PC-9 (cell line): ENCODE measurements at regions of chr11 and their contacts with region 1.

Region 1: DNA sequence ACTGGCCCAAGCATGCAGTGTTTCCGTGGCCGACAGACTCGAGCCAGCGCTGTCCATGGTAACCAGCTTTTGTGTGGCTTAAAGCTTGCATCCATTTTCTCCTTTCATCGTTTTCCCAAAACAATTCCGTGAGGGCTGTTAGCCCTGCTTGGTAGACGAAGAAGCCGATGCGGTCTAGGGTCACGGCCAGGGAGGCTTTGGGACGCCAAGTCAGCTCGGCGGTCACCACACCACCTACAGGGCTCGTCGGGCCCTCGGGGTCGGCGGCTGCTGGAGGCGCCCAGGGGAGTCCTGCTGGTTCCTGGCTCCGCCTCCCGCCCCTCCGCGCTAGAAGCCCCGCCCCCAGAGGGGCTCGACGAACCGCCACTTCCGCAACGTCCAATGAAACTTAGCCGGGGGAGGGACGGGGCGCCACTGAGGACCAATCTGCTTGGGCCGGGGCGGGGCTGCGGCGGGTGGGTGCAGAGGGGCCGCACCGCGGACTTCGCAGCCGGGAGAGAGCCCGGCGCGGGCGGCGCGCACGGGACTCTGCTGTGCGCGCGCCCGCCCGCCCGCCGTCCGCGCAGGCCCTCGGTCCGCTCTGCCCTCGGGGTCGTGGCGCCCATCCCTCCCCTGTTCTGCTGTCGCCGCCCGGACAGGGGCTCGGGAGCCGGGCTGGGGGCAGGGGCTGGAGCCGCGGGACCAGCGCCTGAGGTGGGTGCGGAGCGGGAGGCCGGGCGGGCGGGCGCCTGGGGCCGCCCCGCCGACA is at the start of gene TIGD3:
- DNase-seq: peak; percentile 88 to 99
- H3K4me3 ChIP-seq: peak within 1 kb of the TSS; percentile 87
- H3K27ac ChIP-seq: no peak within 1 kb of the TSS
- H3K4me1 ChIP-seq: peaks cover 11% of the 10 kb centered on the region
- H3K27me3 ChIP-seq: no peaks in the 10 kb centered on the region
- CTCF ChIP-seq: no peak
- total RNA-seq, gene TIGD3: 1.7 and 1.8 TPM in 2 replicates

Region 2: GRCh38 chr11:65301491-65302329 is 52.7 kb before region 1 on chr11:
- CTCF ChIA-PET with region 1: interaction called, 13 read pairs
- POLR2A ChIA-PET with region 1: no interaction called
- intact Hi-C with region 1: no loop called
- DNase-seq: peak in 1 of 2 experiments; percentile 53
- H3K4me3 ChIP-seq: no peak overlapping the region
- H3K27ac ChIP-seq: no peak overlapping the region
- H3K4me1 ChIP-seq: peaks cover 11% of the 10 kb centered on the region
- H3K27me3 ChIP-seq: no peaks in the 10 kb centered on the region
- CTCF ChIP-seq: no peak

Region 3: DNA sequence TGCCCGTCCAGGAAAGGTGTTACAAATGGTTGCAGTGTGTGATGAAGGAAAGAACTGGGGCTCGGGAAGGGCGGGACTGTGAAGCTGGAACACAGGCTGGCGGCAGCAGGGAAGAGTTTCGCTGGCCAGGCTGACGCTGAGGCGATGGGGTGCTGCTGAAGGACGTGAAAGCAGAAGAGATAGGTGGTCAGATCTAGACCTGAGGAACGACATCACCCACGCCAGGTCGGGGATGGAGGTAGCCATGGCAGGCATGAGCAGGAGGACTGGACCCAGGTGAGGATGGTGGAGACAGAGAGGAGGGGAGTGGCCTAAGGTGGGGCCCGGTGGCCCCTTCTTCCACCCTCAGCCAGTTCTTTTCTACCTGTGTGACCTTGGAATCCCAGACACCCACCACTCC is 30.6 kb before region 1 on chr11:
- CTCF ChIA-PET with region 1: no interaction called
- POLR2A ChIA-PET with region 1: no interaction called
- intact Hi-C with region 1: no loop called
- DNase-seq: no peak
- H3K4me3 ChIP-seq: no peak overlapping the region
- H3K27ac ChIP-seq: no peak overlapping the region
- H3K4me1 ChIP-seq: no peaks in the 10 kb centered on the region
- H3K27me3 ChIP-seq: no peaks in the 10 kb centered on the region
- CTCF ChIP-seq: no peak

Region 4: DNA sequence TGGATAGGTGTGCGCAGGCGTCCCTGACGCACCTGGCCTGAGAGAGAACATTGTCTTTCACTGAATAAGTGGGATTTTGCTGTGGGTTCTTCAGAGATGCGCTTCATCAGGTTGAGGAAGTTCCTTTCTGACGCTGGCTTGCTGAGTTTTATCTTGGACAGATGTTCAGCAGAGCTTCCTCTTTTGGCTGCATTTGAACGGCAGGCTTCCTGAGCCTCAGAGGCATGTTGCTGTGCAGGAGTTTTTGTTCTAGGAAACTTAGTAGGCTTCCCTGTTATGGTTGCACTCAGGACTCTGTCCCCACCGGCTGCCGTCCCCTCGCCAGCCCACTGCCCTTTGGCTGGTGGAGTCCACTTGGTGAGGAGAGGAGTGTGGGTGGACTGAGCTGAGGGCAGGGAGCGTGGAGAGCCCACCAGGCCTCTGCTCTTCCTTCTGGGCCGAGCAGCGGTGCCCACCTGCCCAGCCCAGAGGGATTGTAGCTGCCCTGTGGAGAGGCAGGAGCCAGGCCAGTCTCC is 49.2 kb after region 1 on chr11:
- CTCF ChIA-PET with region 1: no interaction called
- POLR2A ChIA-PET with region 1: no interaction called
- intact Hi-C with region 1: no loop called
- DNase-seq: no peak
- H3K4me3 ChIP-seq: no peak overlapping the region
- H3K27ac ChIP-seq: no peak overlapping the region
- H3K4me1 ChIP-seq: no peaks in the 10 kb centered on the region
- H3K27me3 ChIP-seq: no peaks in the 10 kb centered on the region
- CTCF ChIP-seq: no peak

Region 5: DNA sequence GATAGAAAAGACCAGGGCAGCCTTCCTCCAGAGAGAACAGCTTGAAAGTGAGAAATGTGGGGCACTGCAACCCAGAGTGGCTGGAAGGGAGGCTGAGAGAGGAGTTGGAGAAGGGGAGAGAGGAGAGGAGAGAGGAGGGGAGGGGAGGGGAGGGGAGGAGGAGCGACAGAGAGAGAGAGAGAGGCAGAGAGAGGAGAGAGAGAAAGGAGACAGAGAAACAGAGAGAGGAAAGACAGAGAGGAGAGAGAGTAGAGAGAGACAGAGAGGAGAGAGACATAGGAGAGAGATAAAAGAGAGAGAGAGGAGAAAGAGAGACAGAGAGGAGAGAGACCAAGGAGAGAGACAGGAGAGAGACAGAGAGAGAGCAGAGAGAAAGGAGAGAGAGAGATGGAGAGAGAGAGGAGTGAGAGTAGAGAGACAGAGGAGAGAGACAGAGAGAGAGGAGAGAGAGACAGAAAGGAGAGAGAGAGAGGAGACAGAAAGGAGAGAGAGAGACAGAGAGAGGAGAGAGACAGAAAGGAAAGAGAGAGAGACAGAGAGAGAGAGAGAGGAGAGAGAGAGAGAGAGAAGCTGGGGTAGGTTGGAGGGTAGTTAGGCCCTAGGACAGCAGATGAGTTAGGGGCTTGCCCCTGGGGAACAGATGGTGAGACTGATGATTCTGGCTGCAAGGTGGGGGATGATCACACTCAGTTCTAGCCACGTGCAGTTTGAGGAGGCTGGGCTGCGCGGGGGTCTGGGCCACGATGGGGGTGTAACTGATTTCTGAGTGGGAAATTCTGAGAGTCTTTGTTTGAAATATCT is 161.9 kb after region 1 on chr11:
- CTCF ChIA-PET with region 1: no interaction called
- POLR2A ChIA-PET with region 1: no interaction called
- intact Hi-C with region 1: no loop called
- DNase-seq: no peak
- H3K4me3 ChIP-seq: no peak overlapping the region
- H3K27ac ChIP-seq: no peak overlapping the region
- H3K4me1 ChIP-seq: no peaks in the 10 kb centered on the region
- H3K27me3 ChIP-seq: no peaks in the 10 kb centered on the region
- CTCF ChIP-seq: no peak; the same call in 1 of the 2 replicates

Region 6: DNA sequence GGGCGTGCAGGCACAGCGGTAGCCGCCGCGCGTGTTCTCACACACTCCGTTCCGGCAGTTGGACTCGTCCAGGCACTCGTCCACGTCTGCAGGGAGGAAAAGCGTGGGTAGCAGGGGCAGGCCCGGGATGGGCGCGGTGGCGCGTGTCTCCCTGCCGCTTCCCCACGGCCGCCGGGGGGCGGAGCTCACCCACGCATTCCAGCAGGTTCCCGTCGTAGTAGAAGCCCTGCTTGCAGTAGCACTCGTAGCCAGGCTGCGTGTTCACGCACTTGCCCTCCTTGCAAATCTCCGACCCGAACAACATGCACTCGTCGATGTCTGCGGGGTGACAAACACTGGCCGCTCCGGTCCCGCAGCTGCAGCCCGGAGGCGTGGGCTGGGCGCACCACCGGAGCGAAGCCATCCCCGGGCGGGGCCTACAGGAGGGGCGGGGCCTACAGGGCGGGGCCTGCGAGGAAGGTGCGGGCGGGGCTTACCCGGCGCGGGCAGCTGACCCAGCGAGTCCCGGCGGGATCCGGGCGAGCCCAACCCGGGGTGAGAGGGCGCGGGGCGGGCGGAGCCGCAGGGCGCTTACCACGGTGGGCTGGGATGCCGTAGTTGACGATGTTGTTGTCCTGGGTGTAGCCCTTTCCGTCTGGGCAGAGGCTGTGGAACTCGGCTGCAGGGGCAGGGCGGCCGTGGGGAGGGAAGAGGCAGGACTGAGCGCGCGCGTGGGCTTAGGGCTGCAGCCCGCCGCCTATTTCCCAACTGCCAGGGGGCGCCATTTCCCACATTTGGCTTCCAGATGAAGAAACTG is 186.1 kb after region 1 on chr11:
- CTCF ChIA-PET with region 1: no interaction called
- POLR2A ChIA-PET with region 1: no interaction called
- intact Hi-C with region 1: no loop called
- DNase-seq: peak; percentile 66 to 90
- H3K4me3 ChIP-seq: peak overlapping the region; percentile 46; the same call in 1 of the 2 replicates
- H3K27ac ChIP-seq: no peak overlapping the region
- H3K4me1 ChIP-seq: peaks cover 17% of the 10 kb centered on the region
- H3K27me3 ChIP-seq: no peaks in the 10 kb centered on the region
- CTCF ChIP-seq: peak; percentile 95

Region 7: DNA sequence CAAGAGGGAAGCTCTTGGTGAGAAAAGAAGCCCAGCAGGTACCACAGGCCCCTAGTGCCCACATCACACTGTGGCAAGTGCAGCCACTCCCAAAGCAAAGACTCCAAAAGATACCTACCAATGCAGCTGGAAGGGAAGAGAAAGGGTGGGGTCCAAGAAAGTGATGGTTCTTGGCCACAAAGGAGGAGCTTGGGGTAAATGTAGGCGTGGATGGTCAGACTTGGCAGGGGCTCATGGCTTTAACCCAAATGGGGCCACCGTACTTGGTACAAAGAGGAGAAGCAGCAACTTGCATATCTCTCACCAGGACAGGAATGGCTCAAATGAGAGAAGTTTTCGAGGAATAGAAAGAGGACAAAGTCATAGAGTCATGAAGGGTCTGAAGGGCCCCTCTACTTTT is 254.8 kb after region 1 on chr11:
- CTCF ChIA-PET with region 1: no interaction called
- POLR2A ChIA-PET with region 1: interaction called, 12 read pairs
- intact Hi-C with region 1: no loop called
- DNase-seq: no peak
- H3K4me3 ChIP-seq: no peak overlapping the region
- H3K27ac ChIP-seq: no peak overlapping the region
- H3K4me1 ChIP-seq: peaks cover 16% of the 10 kb centered on the region; the same call in 1 of the 2 replicates
- H3K27me3 ChIP-seq: no peaks in the 10 kb centered on the region
- CTCF ChIP-seq: no peak